ENCODE measurements at regions of chr16 and their contacts with region 1.

Region 1: DNA sequence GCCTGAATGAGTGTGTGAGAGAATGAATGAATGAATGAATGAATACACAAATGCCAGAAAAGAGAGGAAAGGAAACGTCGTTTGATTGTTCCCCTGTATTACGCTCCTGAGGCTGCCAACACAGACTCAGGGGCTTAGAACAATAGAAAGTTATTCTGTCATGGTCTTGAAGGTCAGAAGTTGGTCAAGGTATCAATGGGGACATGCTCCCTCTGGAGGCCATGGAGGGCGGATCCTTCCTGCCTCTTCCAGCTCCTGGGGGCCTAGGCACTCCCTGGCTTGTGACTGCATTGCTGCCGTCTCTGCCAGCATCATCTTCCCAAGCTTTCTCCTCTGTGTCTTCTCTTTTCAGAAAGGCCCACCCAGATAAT is 1.5 kb upstream of the SLC38A8 start:
- DNase-seq: peak; percentile 59 to 68 (median 66)
- ATAC-seq: peak; percentile 72
- H3K4me3 ChIP-seq: no peak overlapping the region
- H3K27ac ChIP-seq: no peak overlapping the region
- H3K4me1 ChIP-seq: peaks cover 16 to 36% of the 10 kb centered on the region in 2 experiments
- H3K27me3 ChIP-seq: peaks cover 33 to 44% of the 10 kb centered on the region in 2 experiments; a peak in 4 of 5 replicates
- CTCF ChIP-seq: peak; percentile 53 to 71 (median 69)
- EP300 ChIP-seq: no peak
- POLR2A ChIP-seq: no peak
- RAD21 ChIP-seq: peak; percentile 11 to 71

Region 2: DNA sequence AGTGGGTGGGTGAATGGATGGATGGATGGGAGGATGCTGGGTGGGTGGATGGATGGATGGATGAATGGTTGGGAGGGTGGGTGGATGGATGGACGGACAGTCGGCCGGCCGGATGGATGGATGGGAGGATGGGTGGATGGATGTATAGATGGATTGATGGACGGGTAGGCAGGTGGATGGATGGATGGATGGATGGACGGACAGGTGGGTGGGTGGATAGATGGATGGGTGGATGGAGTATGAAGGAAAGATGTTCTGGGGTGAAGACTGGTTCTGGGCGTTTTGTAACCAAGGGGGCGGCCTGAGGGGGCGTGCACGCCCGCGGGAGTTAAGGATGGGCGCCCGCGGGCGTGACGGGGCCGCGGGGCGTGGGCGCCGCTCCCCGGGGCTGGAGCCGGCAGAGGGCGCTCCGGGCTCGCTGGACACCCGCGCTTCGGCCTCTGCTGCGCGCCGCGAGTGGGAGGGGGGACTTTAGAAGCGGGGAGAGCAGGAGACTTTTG is 76.2 kb before region 1 on chr16 and contains the start of gene NECAB2:
- CTCF ChIA-PET with region 1: interaction called, 9 read pairs
- POLR2A ChIA-PET with region 1: interaction called, 4 read pairs
- in situ Hi-C with region 1: loop called (anchors 10 kb)
- intact Hi-C with region 1: loop called (anchors 1 kb)
- DNase-seq: peak; percentile 78 to 98 (median 96)
- ATAC-seq: peak; percentile 91
- H3K4me3 ChIP-seq: peak within 1 kb of the TSS; percentile 33
- H3K27ac ChIP-seq: no peak within 1 kb of the TSS
- H3K4me1 ChIP-seq: peaks cover 0 to 31% of the 10 kb centered on the region in 2 experiments; a peak in 1 of 5 replicates
- H3K27me3 ChIP-seq: peaks cover 18 to 32% of the 10 kb centered on the region in 2 experiments; a peak in 3 of 5 replicates
- CTCF ChIP-seq: peak; percentile 57 to 94 (median 82)
- EP300 ChIP-seq: no peak
- POLR2A ChIP-seq: no peak
- RAD21 ChIP-seq: peak; percentile 86 to 90
- polyA plus RNA-seq, gene NECAB2: not detected

Region 3: DNA sequence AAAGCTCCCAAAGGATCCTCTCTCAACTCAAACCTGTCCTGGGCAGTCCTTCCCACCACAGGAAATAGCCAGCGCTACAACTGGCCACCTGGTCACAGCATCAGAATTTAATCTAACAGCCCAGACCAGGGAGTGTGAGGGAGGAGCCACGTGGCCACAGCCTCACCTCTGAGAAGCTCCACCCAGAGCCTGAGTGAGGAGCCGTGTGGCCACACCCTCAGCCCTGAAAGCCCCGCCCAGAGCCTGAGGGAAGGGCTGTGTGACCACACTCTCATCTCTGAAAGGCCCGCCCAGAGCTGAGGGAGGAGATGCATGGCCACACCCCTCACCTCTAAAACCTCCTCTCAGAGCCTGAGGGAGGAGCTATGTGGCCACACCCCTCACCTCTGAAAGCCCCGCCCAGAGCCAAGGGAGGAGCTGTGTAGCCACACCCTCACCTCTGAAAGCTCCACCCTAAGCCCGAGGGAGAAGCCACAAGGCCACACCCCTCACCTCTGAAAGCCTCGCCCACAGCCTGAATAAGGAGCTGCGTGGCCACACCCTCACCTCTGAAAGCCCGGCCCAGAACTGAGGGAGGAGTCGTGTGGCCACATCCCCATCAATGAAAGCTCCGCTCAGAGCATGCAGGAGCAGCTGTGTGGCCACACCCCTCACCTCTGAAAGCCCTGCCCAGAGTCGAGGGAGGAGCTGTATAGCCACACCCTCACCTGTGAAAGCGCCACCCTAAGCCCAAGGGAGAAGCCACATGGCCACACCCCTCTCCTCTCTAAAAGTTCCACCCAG is 30.1 kb before region 1 on chr16:
- CTCF ChIA-PET with region 1: no interaction called
- POLR2A ChIA-PET with region 1: interaction called, 7 read pairs
- in situ Hi-C with region 1: no loop called
- intact Hi-C with region 1: loop called (anchors 2 kb)
- DNase-seq: peak; percentile 98 to 99 (median 98)
- ATAC-seq: peak; percentile 94
- H3K4me3 ChIP-seq: no peak overlapping the region; the same call in 1 of the 2 replicates
- H3K27ac ChIP-seq: peak overlapping the region; percentile 45; the same call in 1 of the 3 replicates
- H3K4me1 ChIP-seq: peaks cover 10 to 19% of the 10 kb centered on the region in 2 experiments; a peak in 4 of 5 replicates
- H3K27me3 ChIP-seq: peaks cover 4 to 19% of the 10 kb centered on the region in 2 experiments; a peak in 3 of 5 replicates
- CTCF ChIP-seq: no peak; a peak in 1 of 6 replicates
- EP300 ChIP-seq: peak; percentile 53; the same call in 1 of the 2 replicates
- POLR2A ChIP-seq: no peak
- RAD21 ChIP-seq: no peak